ENCODE measurements at regions of chr16 and their contacts with region 1.

Region 1: GRCh38 chr16:53445534-53445933 is 11.3 kb downstream of the RBL2 start:
- DNase-seq: no peak
- ATAC-seq: peak; percentile 78
- H3K4me3 Mint-ChIP-seq: peak overlapping the region; percentile 62
- H3K27ac Mint-ChIP-seq: peak overlapping the region; percentile 81
- H3K4me1 Mint-ChIP-seq: peaks cover 29% of the 10 kb centered on the region
- H3K27me3 Mint-ChIP-seq: no peaks in the 10 kb centered on the region

Region 2: DNA sequence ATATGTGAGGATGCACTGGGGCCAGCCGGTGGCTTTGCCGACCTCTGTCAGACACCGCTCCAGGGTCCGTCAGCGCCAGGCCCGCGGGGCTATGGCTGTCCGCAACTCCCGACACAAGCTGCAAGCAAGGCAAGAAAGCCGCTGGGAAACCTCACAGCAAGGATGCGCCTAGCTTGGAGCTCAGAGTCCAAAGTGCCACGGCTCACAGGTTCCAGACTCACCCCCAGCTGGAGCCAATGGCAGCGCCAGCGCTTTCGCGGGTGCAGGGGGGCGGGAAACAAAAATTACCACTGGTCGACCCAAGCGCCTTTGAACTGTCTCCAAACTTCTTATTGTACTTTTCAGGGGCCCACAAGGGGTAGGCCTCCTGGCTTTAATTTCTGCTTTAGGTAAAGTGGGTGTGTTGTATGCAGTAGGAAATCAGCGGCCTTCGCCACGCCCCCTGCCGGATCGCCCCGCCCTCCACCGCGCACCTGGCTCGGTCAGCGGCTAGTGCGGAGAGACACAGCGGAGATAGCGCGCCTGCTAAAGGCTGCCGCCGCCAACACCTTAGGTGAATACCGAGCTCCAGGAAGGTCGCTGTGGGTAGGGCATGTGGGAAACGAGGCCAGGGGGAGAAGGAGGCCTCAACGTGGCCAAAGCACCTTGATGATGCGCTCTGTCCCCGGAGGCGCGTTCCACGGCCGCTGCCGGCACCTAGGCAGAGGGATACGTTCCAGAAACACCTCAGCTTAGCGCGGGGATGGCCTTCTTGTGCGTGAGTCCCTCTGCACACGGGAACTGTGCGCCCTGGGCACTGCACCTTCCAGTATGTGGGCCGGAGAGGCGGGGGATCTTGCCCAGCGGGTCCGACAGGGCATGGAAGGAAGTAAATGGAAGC is 72.3 kb before region 1 on chr16:
- CTCF ChIA-PET with region 1: no interaction called
- DNase-seq: peak; percentile 75
- ATAC-seq: peak; percentile 96
- H3K4me3 Mint-ChIP-seq: no peak overlapping the region
- H3K27ac Mint-ChIP-seq: no peak overlapping the region
- H3K4me1 Mint-ChIP-seq: peaks cover 17% of the 10 kb centered on the region
- H3K27me3 Mint-ChIP-seq: peaks cover 16% of the 10 kb centered on the region

Region 3: DNA sequence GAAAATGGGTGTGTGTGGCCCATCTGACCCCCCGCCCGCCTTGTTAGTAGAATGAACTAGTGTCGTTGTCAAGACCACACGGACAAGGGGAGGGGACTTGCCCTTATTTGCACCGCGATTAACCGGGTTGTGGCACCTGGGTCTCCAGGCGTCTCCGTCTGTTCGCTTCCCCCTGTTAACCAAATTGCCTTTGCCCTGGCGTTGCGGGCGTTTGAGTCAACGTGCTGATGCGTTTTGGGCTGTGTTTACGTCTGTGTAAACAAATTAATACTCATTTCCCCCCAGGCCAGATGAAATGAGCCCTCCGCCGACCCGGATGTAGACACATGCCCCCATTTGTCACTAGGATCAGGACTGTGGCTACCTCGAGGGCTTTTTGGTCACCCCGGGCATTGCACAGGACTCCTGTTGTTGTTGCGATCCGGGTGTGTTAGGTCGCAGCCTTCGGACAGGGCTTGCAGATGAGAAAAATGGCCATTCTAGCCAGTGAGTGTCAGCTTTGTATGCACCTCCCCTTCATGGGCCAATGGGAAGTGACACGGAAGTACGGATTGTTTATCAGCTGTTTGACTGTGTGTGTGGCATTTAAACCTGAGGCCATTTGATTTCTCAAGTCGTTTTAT is 10.4 kb before region 1 on chr16:
- CTCF ChIA-PET with region 1: interaction called, 12 read pairs
- DNase-seq: peak; percentile 84
- ATAC-seq: peak; percentile 79
- H3K4me3 Mint-ChIP-seq: peak overlapping the region; percentile 94
- H3K27ac Mint-ChIP-seq: peak overlapping the region; percentile 91
- H3K4me1 Mint-ChIP-seq: peaks cover 40% of the 10 kb centered on the region
- H3K27me3 Mint-ChIP-seq: no peaks in the 10 kb centered on the region

Measured in activated CD8-positive, alpha-beta memory T cell treated with anti-CD3 and anti-CD28 coated beads, Interleukin-2, amount 10 ng/mL, durations not matched to agents 7 days and 5 days (primary cell).